CD4-positive, alpha-beta T cell (primary cell): ENCODE measurements at regions of chrX and their contacts with region 1.

Region 1: DNA sequence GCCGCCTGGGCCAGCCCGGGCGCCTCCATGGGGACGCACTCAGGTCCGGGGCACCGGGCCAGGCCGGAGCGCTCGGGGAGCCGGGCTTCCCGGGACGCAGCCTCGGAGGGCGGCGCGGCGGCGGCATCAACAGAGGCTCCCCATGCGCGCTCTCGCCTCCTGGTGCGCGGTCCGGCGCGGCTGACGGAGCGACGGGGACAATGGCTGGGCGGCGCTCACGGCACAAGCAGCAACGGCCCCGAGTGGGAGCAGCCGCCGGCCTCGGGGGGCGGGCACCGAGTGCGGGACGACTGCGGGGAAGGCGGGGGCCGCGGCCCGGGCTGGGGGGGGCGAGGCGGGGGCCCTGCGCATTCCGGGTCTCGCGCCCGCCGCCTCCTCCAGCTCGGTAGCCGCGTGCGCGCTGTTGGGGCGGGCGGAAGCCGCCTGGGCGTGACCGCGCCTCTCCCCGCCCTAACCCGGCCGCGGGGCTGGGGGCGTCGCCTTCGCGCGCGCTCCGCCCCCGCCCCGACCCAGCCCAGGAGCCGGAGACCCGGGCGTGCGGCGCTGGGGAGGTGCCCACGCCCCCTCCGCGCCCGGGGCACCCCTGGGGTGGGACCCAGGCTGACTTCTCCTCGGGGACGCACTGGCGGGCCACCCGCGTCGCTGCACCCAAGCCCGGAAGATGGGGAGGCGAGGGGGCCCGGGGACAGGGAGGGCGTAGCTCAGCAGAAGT is at the start of gene PRKX:
- DNase-seq: peak; percentile 32 to 87 (median 68)
- ATAC-seq: peak; percentile 88
- H3K4me3 ChIP-seq: peak within 1 kb of the TSS; percentile 76
- H3K4me3 Mint-ChIP-seq: peak within 1 kb of the TSS; percentile 99
- H3K27ac ChIP-seq: peak within 1 kb of the TSS; percentile 29 to 34
- H3K27ac Mint-ChIP-seq: peak within 1 kb of the TSS; percentile 88
- H3K4me1 ChIP-seq: peaks cover 26% of the 10 kb centered on the region
- H3K4me1 Mint-ChIP-seq: peaks cover 13% of the 10 kb centered on the region
- H3K27me3 ChIP-seq: no peaks in the 10 kb centered on the region
- H3K27me3 Mint-ChIP-seq: no peaks in the 10 kb centered on the region
- CTCF ChIP-seq: no peak
- total RNA-seq, gene PRKX: 31.6 to 35.4 TPM

Region 2: GRCh38 chrX:3659761-3660160 is 53.6 kb before region 1 on chrX:
- CTCF ChIA-PET with region 1: no interaction called
- POLR2A ChIA-PET with region 1: no interaction called
- intact Hi-C with region 1: loop called in 1 of 2 experiments (anchors 5 kb)
- DNase-seq: no peak
- ATAC-seq: no peak
- H3K4me3 ChIP-seq: no peak overlapping the region
- H3K4me3 Mint-ChIP-seq: no peak overlapping the region
- H3K27ac ChIP-seq: no peak overlapping the region
- H3K27ac Mint-ChIP-seq: no peak overlapping the region
- H3K4me1 ChIP-seq: no peaks in the 10 kb centered on the region
- H3K4me1 Mint-ChIP-seq: no peaks in the 10 kb centered on the region
- H3K27me3 ChIP-seq: no peaks in the 10 kb centered on the region
- H3K27me3 Mint-ChIP-seq: no peaks in the 10 kb centered on the region
- CTCF ChIP-seq: no peak

Region 3: DNA sequence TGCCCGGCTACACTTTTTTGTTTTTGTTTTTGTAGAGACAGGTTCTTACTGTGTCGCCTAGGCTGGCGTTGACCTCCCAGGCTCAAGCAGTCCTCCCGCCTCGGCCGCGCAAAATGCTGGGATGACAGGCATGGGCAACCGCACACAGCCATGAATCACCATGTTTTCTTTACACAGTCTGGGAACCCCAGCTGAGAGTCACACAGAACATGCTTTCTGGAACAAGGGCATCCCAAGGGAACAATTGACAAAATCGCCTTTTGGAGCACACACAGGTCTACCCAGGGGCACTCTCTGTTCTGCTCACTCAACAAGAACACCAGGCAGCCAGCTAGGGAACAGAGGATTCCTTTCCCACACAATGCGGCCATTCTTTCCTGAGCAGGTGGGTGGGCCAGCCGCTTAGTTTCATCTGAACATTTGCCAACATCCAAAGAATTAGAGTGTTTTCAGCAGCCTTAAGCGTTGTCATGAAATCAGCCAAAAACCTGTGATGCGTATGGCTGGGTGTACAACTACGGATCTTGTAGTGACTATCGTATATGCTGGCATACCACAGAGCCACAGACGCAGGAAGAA is 15.6 kb before region 1 on chrX:
- CTCF ChIA-PET with region 1: interaction called, 3 read pairs
- POLR2A ChIA-PET with region 1: interaction called, 18 read pairs
- intact Hi-C with region 1: no loop called
- DNase-seq: no peak
- ATAC-seq: no peak
- H3K4me3 ChIP-seq: no peak overlapping the region
- H3K4me3 Mint-ChIP-seq: no peak overlapping the region
- H3K27ac ChIP-seq: no peak overlapping the region
- H3K27ac Mint-ChIP-seq: peak overlapping the region; percentile 58
- H3K4me1 ChIP-seq: peaks cover 31% of the 10 kb centered on the region
- H3K4me1 Mint-ChIP-seq: peaks cover 44% of the 10 kb centered on the region
- H3K27me3 ChIP-seq: no peaks in the 10 kb centered on the region
- H3K27me3 Mint-ChIP-seq: no peaks in the 10 kb centered on the region
- CTCF ChIP-seq: no peak

Region 4: DNA sequence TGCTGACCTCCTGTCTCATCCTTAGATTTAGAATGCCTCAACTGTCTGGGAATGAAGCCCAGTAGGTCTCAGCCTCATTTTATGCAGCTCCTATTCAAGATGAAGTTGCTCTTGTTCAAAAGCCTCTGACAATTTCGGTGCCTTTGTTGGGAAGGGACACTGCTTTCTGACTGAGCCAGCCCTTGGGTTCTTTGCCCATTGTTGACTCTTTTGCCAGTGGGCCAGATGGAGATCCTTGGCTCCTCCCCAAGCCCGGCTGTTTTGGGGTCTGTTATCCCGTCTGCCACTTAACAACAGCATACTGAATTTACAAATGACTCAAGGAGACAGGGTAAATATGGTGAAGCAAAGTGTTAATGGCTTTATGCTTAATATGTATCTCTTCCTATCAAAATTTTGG is 58.4 kb after region 1 on chrX:
- CTCF ChIA-PET with region 1: no interaction called
- POLR2A ChIA-PET with region 1: no interaction called
- intact Hi-C with region 1: no loop called
- DNase-seq: no peak
- ATAC-seq: no peak
- H3K4me3 ChIP-seq: no peak overlapping the region
- H3K4me3 Mint-ChIP-seq: no peak overlapping the region
- H3K27ac ChIP-seq: no peak overlapping the region
- H3K27ac Mint-ChIP-seq: no peak overlapping the region
- H3K4me1 ChIP-seq: no peaks in the 10 kb centered on the region
- H3K4me1 Mint-ChIP-seq: no peaks in the 10 kb centered on the region
- H3K27me3 ChIP-seq: no peaks in the 10 kb centered on the region
- H3K27me3 Mint-ChIP-seq: peaks cover 3% of the 10 kb centered on the region
- CTCF ChIP-seq: no peak